ENCODE measurements at regions of chr20 and their contacts with region 1.

Region 1: GRCh38 chr20:59955132-59955796 is 3.0 kb upstream of the CDH26 start:
- DNase-seq: no peak
- ATAC-seq: peak; percentile 39; the same call in 1 of the 2 replicates
- H3K4me3 Mint-ChIP-seq: no peak overlapping the region
- H3K27ac Mint-ChIP-seq: peak overlapping the region; percentile 49; the same call in 1 of the 2 replicates
- H3K4me1 Mint-ChIP-seq: peaks cover 6% of the 10 kb centered on the region
- H3K27me3 Mint-ChIP-seq: peaks cover 8% of the 10 kb centered on the region
- CTCF ChIP-seq: no peak

Region 2: GRCh38 chr20:59940174-59940971 is 14.9 kb before region 1 on chr20 and contains the starts of genes FAM217B and PPP1R3D:
- CTCF ChIA-PET with region 1: interaction called, 13 read pairs
- POLR2A ChIA-PET with region 1: no interaction called
- DNase-seq: peak; percentile 91
- ATAC-seq: peak; percentile 93
- H3K4me3 Mint-ChIP-seq: peak within 1 kb of the TSS; percentile 86
- H3K27ac Mint-ChIP-seq: peak within 1 kb of the TSS; percentile 97
- H3K4me1 Mint-ChIP-seq: peaks cover 7% of the 10 kb centered on the region
- H3K27me3 Mint-ChIP-seq: peaks cover 37% of the 10 kb centered on the region
- CTCF ChIP-seq: no peak
- total RNA-seq, gene FAM217B: 14.8 to 17.9 TPM (median 16.0 TPM) in 3 replicates
- total RNA-seq, gene PPP1R3D: 2.4 to 3.6 TPM (median 3.2 TPM) in 3 replicates

Measured in WTC11 (cell line).